GM12878 (cell line): ENCODE measurements at regions of chr4 and their contacts with region 1.

Region 1: DNA sequence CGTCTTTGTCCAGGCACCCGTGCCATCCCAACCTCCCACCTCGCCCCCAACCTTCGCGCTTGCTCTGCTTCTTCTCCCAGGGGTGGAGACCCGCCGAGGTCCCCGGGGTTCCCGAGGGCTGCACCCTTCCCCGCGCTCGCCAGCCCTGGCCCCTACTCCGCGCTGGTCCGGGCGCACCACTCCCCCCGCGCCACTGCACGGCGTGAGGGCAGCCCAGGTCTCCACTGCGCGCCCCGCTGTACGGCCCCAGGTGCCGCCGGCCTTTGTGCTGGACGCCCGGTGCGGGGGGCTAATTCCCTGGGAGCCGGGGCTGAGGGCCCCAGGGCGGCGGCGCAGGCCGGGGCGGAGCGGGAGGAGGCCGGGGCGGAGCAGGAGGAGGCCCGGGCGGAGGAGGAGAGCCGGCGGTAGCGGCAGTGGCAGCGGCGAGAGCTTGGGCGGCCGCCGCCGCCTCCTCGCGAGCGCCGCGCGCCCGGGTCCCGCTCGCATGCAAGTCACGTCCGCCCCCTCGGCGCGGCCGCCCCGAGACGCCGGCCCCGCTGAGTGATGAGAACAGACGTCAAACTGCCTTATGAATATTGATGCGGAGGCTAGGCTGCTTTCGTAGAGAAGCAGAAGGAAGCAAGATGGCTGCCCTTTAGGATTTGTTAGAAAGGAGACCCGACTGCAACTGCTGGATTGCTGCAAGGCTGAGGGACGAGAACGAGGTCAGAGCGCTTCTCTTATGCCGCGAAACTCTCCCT is at the start of gene TET2:
- DNase-seq: peak; percentile 74
- ATAC-seq: peak; percentile 80
- H3K4me3 ChIP-seq: peak within 1 kb of the TSS; percentile 99
- H3K27ac ChIP-seq: peak within 1 kb of the TSS; percentile 96
- H3K4me1 ChIP-seq: no peaks in the 10 kb centered on the region
- H3K27me3 ChIP-seq: no peaks in the 10 kb centered on the region
- CTCF ChIP-seq: peak in 1 of 3 experiments; percentile 8; a peak in 1 of 6 replicates
- EP300 ChIP-seq: no peak; a peak in 1 of 4 replicates
- POLR2A ChIP-seq: peak; percentile 76
- RAD21 ChIP-seq: no peak; the same call in 1 of the 2 replicates
- polyA plus RNA-seq, gene TET2: 3.7 to 6.6 TPM

Region 2: GRCh38 chr4:104490770-104491480 is 655.5 kb before region 1 on chr4:
- CTCF ChIA-PET with region 1: no interaction called
- POLR2A ChIA-PET with region 1: no interaction called
- RAD21 ChIA-PET with region 1: no interaction called
- SMC1A ChIA-PET with region 1: no interaction called
- in situ Hi-C with region 1: no loop called
- intact Hi-C with region 1: loop called (anchors 10 kb)
- DNase-seq: no peak
- ATAC-seq: peak; percentile 7
- H3K4me3 ChIP-seq: peak overlapping the region; percentile 78
- H3K27ac ChIP-seq: peak overlapping the region; percentile 97
- H3K4me1 ChIP-seq: peaks cover 16% of the 10 kb centered on the region
- H3K27me3 ChIP-seq: no peaks in the 10 kb centered on the region
- CTCF ChIP-seq: no peak
- EP300 ChIP-seq: no peak
- POLR2A ChIP-seq: peak; percentile 63
- RAD21 ChIP-seq: no peak

Region 3: DNA sequence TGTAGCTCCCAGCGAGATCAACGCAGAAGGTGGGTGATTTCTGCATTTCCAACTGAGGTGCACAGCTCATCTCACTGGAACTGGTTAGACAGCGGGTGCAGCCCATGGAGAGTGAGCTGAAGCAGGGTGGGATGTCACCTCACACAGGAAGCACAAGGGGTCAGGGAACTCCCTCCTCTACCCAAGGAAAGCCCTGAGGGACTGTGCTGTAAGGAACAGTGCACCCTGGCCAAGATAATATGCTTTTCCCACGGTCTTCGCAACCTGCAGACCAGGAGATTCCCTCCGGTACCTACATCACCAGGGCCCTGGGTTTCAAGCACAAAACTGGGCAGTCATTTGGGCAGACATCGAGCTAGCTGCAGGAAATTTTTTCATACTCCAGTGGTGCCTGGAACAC is 216.1 kb before region 1 on chr4:
- CTCF ChIA-PET with region 1: interaction called, 8 read pairs
- POLR2A ChIA-PET with region 1: no interaction called
- RAD21 ChIA-PET with region 1: no interaction called
- SMC1A ChIA-PET with region 1: interaction called, 3 read pairs
- in situ Hi-C with region 1: no loop called
- intact Hi-C with region 1: loop called (anchors 2 kb)
- DNase-seq: peak; percentile 51
- ATAC-seq: peak; percentile 54
- H3K4me3 ChIP-seq: no peak overlapping the region; the same call in 1 of the 2 replicates
- H3K27ac ChIP-seq: peak overlapping the region; percentile 62
- H3K4me1 ChIP-seq: peaks cover 14% of the 10 kb centered on the region
- H3K27me3 ChIP-seq: no peaks in the 10 kb centered on the region
- CTCF ChIP-seq: no peak
- EP300 ChIP-seq: no peak
- POLR2A ChIP-seq: no peak
- RAD21 ChIP-seq: no peak

Region 4: DNA sequence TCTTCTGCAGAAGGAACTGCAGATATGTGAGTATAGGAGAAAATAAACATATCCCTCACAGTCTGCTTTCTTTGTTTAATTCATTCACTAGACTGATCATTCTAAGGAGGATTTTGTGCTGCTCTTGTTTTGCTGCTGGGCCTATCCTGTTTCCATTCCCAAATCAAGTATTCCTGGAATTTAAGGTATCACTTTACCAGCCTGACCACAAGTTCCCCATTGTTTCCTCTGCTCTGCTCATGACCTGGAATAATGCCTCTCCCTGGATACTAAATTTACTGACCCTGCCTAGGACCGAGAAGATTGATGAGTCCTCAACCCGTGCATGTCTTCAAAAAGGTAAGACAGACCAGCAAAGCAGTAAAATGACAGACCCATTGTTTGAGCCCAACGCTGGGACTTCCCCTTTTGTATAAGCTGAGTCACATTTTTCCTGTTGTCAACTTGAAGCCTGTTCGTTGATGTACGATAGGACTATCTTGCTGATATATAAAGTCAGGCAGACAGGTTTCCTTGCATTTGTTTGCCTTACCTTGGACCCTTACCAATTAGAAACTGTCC is 85.2 kb before region 1 on chr4:
- CTCF ChIA-PET with region 1: no interaction called
- POLR2A ChIA-PET with region 1: no interaction called
- RAD21 ChIA-PET with region 1: interaction called, 3 read pairs
- SMC1A ChIA-PET with region 1: interaction called, 4 read pairs
- in situ Hi-C with region 1: no loop called
- intact Hi-C with region 1: loop called (anchors 2 kb)
- DNase-seq: peak; percentile 85
- ATAC-seq: peak; percentile 68
- H3K4me3 ChIP-seq: peak overlapping the region; percentile 45
- H3K27ac ChIP-seq: peak overlapping the region; percentile 94
- H3K4me1 ChIP-seq: peaks cover 47% of the 10 kb centered on the region
- H3K27me3 ChIP-seq: no peaks in the 10 kb centered on the region
- CTCF ChIP-seq: no peak
- EP300 ChIP-seq: peak in 1 of 2 experiments; percentile 50; a peak in 2 of 4 replicates
- POLR2A ChIP-seq: no peak
- RAD21 ChIP-seq: 0 out of 2 replicates have a peak, but pooled peaks have one; percentile 9

Region 5: GRCh38 chr4:105092356-105092755 is 54.1 kb before region 1 on chr4:
- CTCF ChIA-PET with region 1: no interaction called
- POLR2A ChIA-PET with region 1: no interaction called
- RAD21 ChIA-PET with region 1: no interaction called
- SMC1A ChIA-PET with region 1: no interaction called
- in situ Hi-C with region 1: no loop called
- intact Hi-C with region 1: no loop called
- DNase-seq: no peak
- ATAC-seq: no peak
- H3K4me3 ChIP-seq: no peak overlapping the region
- H3K27ac ChIP-seq: no peak overlapping the region
- H3K4me1 ChIP-seq: no peaks in the 10 kb centered on the region
- H3K27me3 ChIP-seq: no peaks in the 10 kb centered on the region
- CTCF ChIP-seq: no peak
- EP300 ChIP-seq: no peak
- POLR2A ChIP-seq: no peak
- RAD21 ChIP-seq: no peak

Region 6: DNA sequence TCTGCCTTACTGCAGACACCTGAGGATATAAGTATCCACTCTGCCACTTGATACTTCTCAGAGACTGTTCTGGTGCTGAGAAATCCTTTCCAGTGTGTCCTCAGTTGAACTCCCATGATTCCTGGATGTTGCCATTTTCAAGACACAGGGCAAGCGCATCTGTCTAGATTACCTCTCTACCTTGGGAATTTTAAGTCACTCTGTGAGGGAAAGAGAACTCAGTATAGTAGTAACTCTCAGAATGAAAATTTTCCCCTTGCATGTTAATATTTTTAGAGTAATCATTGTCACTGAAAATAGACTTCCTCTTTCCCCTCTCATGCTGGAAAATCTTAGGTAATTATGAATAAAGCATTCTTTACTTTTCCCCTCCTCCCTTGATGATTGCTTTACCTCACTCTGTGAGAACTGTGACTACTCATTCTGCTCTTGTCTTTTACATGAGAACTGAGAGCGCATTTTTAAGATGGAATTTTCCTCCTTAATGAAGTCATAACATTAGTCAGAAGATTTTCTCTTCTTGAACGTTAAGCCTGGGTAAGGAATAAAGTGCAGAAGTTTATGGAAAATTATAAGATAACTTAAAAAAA is 45.3 kb after region 1 on chr4:
- CTCF ChIA-PET with region 1: interaction called, 14 read pairs
- POLR2A ChIA-PET with region 1: interaction called, 4 read pairs
- RAD21 ChIA-PET with region 1: interaction called, 4 read pairs
- SMC1A ChIA-PET with region 1: interaction called, 8 read pairs
- in situ Hi-C with region 1: no loop called
- intact Hi-C with region 1: loop called (anchors 2 kb)
- DNase-seq: peak; percentile 81
- ATAC-seq: peak; percentile 65
- H3K4me3 ChIP-seq: 0 out of 2 replicates have a peak overlapping the region, but pooled peaks have one; percentile 10
- H3K27ac ChIP-seq: peak overlapping the region; percentile 81
- H3K4me1 ChIP-seq: peaks cover 46% of the 10 kb centered on the region
- H3K27me3 ChIP-seq: no peaks in the 10 kb centered on the region
- CTCF ChIP-seq: no peak
- EP300 ChIP-seq: peak in 1 of 2 experiments; percentile 72; a peak in 2 of 4 replicates
- POLR2A ChIP-seq: no peak
- RAD21 ChIP-seq: peak; percentile 34; the same call in 1 of the 2 replicates

Region 7: DNA sequence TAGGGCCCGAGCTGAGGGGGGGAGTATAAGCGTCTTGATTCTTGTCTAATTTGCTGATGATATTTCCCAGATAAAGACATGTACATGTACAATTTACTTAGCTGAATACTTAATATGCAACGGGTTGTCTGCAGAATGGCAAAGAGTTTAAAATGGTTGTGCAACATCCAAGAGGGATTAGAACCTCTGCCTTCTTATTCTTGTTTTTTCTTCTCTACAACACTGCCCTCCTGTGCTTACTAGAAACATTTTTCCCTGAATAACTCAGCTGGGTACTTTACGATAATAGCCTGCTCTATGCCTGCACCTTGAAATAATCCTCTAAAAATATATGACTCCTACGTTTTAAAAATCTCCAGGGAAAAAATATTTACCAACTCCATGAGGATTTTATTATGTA is 520.2 kb after region 1 on chr4:
- CTCF ChIA-PET with region 1: interaction called, 3 read pairs
- POLR2A ChIA-PET with region 1: no interaction called
- RAD21 ChIA-PET with region 1: interaction called, 4 read pairs
- SMC1A ChIA-PET with region 1: no interaction called
- in situ Hi-C with region 1: no loop called
- intact Hi-C with region 1: loop called (anchors 10 kb)
- DNase-seq: no peak
- ATAC-seq: peak; percentile 85
- H3K4me3 ChIP-seq: no peak overlapping the region
- H3K27ac ChIP-seq: no peak overlapping the region
- H3K4me1 ChIP-seq: no peaks in the 10 kb centered on the region
- H3K27me3 ChIP-seq: no peaks in the 10 kb centered on the region
- CTCF ChIP-seq: peak; percentile 28 to 44 (median 34); a peak in 4 of 6 replicates
- EP300 ChIP-seq: no peak
- POLR2A ChIP-seq: no peak
- RAD21 ChIP-seq: peak; percentile 72